ENCODE measurements at regions of chr9 and their contacts with region 1.

Region 1: DNA sequence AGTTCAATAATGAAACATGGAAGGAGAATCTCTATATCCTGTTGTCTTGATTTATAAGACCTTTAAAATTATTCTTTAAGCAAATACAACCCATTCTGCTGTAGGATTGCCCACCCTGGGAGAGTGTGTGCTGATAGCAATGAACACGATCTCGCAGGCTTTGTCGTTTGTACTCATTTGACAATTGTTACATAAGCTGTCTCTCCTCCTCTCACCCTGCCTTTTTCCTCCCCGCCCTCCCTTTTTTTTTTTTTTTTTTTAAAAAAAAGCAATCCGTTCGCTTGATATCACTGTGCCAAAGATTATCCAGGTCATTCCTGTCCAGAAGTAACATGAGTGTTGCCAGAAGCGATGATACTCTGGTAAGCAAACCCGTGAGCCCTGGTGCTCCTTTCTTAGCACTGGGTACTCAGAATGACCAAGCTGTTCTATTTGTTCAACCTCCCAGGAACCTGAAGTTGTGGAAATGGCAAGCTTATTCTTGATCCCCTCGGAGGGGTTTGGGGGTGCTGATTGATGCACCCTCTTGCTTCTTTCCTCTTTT is 82.7 kb upstream of the CTSL start:
- DNase-seq: no peak
- H3K27ac ChIP-seq: no peak overlapping the region
- CTCF ChIP-seq: no peak

Region 2: DNA sequence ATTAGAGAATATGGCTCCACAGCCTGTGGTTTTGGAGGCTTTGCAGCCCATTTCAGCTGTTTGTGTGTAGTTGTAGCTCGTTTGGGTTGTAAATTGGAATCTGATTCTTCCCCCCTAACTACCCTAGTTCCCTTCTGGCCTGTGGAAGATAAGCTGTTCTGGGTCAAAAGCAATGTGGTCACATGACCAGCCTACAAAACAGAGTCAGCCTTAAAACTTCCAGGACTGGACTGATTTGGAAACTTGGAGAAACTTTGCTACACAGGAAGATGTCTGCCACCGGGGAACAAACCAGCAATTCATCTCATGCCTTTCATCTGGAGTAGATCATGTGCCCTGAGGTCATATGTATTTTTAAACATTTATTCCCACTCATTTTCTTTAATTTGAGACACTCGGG is 61.7 kb before region 1 on chr9:
- CTCF ChIA-PET with region 1: no interaction called
- POLR2A ChIA-PET with region 1: interaction called, 12 read pairs
- DNase-seq: no peak
- H3K27ac ChIP-seq: no peak overlapping the region
- CTCF ChIP-seq: no peak

Region 3: GRCh38 chr9:87656485-87656884 is 13.3 kb after region 1 on chr9:
- CTCF ChIA-PET with region 1: no interaction called
- POLR2A ChIA-PET with region 1: no interaction called
- DNase-seq: no peak
- H3K27ac ChIP-seq: no peak overlapping the region
- CTCF ChIP-seq: no peak